ENCODE measurements at regions of chr9 and their contacts with region 1.

Region 1: GRCh38 chr9:119556129-119556875 is 187.1 kb upstream of the BRINP1 start:
- DNase-seq: peak; percentile 67 to 96 (median 81)

Region 2: GRCh38 chr9:119877306-119877705 is 321.0 kb after region 1 on chr9:
- intact Hi-C with region 1: no loop called
- DNase-seq: no peak

Region 3: GRCh38 chr9:120348951-120349429 is 792.7 kb after region 1 on chr9:
- intact Hi-C with region 1: loop called (anchors 1 kb)
- DNase-seq: peak in 7 of 10 donors; percentile 20 to 91 (median 37)

Measured in posterior cingulate gyrus (tissue), 11 donors.